Common myeloid progenitor, CD34-positive (primary cell): ENCODE measurements at regions of chr12 and their contacts with region 1.

Region 1: DNA sequence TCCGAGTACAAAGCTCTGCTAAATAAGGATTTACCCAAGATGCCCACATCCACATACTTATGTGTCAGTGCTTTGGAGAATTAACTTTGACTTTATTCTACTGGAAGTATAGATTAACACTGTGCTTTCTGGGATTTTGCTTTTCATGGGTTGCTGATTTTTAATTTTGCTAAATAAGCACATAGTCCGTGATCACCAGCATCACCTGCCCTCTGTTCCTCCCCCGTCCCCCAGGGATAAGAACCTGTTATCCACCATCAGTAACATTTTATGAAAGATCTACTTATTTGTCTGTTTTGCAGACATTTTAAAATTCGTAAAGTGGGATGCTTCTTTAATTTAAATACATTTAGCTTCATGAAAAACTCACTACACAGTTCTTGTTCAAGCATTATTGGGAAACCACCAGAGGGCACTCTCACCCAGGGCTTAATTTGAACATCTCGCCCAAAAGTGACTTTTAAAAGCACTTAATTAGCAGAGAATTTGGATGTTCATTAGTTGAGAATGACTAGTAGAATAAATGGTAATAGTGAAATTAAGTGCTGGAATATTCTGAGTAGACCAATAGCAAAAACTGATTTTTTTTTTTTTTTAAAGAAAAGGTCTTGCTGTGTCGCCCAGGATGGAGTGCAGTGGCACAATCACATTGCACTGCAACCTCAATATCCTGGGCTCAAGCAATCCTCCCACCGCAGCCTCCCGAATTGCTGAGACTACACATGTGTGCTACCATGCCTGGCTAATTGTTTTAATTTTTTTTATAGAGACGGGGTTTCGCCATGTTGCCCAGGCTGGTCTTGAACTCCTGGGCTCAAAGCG is 35.7 kb downstream of the MRPL42 start:
- DNase-seq: peak; percentile 69 to 85 (median 77)
- H3K4me3 ChIP-seq: no peak overlapping the region
- H3K27ac ChIP-seq: no peak overlapping the region
- H3K4me1 ChIP-seq: no peaks in the 10 kb centered on the region
- H3K27me3 ChIP-seq: no peaks in the 10 kb centered on the region

Region 2: GRCh38 chr12:93403988-93404803 is 98.8 kb before region 1 on chr12:
- CTCF ChIA-PET with region 1: no interaction called
- POLR2A ChIA-PET with region 1: no interaction called
- DNase-seq: no peak
- H3K4me3 ChIP-seq: no peak overlapping the region
- H3K27ac ChIP-seq: no peak overlapping the region
- H3K4me1 ChIP-seq: no peaks in the 10 kb centered on the region
- H3K27me3 ChIP-seq: no peaks in the 10 kb centered on the region

Region 3: DNA sequence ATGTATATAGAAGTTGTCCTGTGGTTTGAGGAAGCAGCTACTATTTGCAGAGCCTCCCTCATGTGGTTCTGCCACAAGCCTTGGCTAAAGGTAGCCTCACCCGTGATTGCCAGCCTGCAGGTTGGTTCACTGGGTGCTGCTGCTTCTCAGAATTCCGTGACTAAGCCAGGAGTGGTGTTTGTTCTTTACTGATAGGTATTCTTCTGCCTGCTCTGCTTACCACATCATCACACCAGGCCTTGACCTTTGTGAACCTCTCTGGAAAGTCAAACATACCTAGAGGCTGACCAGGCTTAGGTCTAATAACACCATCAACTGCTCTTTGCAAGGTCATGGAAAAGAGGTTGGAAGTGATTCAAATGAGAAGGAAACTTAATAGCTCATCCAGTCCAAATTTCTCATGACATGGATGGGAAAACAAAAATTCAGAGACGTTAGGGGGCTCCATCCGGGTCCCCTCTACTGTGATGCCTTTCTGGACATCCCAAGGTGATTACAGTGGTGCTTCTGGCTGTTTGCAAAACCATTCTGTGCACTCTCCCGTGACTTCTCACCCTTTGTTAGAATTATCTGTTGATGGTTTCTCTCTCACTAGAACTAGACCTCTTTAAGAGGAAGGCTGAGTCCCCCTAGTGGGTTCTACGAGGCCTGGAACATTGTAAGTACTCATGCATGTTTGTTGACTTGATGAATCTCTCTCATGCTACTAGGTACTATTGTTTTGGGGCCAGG is 61.0 kb after region 1 on chr12:
- CTCF ChIA-PET with region 1: interaction called, 34 read pairs
- POLR2A ChIA-PET with region 1: no interaction called
- DNase-seq: peak; percentile 68 to 83 (median 81)
- H3K4me3 ChIP-seq: no peak overlapping the region
- H3K27ac ChIP-seq: peak overlapping the region in 1 of 2 experiments; percentile 1
- H3K4me1 ChIP-seq: peaks cover 0 to 16% (median 4%) of the 10 kb centered on the region in 4 experiments
- H3K27me3 ChIP-seq: no peaks in the 10 kb centered on the region

Region 4: DNA sequence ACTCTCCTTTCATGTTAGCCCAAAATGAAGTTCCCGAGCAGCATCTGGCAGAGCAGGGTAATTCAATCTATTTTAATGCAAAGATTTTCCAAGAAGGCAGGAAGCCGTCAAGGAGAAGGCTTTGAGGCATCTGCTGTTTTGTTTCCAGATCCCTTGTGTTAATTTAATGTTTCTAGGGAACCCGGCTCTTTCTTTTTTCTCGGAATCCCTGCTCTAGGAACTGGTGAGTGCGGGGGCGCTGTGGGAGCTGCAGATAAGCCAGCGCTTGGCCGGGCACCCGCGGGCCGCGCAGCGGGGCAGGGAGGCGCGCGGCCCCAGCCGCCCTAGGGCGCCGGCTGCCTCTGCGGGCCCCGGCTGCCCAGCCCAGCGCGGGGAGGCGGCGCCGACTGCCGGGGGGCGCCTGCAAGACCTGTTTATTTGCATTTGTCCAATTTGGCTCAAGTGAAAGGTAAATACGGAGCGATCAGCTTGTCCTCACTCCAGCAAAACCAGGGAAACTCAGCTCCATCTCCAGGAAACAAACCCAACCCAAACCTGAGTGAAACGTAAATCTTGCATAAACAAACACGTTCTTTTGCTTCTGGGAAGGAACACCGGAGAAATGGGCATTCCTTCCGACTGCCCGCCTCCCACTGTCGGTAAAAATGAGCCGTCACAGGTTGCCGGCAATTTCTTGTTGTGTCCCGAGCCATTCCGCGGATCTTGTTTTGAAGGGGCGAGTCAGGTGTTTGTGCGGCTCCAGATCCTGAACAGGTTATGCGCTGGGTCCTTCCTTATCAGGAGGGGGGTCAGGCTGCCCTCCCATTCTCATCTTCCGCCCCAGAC is 239.3 kb after region 1 on chr12:
- CTCF ChIA-PET with region 1: interaction called, 10 read pairs
- POLR2A ChIA-PET with region 1: no interaction called
- DNase-seq: peak; percentile 81 to 86 (median 83)
- H3K4me3 ChIP-seq: peak overlapping the region; percentile 44 to 98 (median 83)
- H3K27ac ChIP-seq: peak overlapping the region; percentile 87 to 92
- H3K4me1 ChIP-seq: peaks cover 16 to 68% (median 45%) of the 10 kb centered on the region in 4 experiments
- H3K27me3 ChIP-seq: no peaks in the 10 kb centered on the region